ENCODE measurements at regions of chr15 and their contacts with region 1.

Region 1: DNA sequence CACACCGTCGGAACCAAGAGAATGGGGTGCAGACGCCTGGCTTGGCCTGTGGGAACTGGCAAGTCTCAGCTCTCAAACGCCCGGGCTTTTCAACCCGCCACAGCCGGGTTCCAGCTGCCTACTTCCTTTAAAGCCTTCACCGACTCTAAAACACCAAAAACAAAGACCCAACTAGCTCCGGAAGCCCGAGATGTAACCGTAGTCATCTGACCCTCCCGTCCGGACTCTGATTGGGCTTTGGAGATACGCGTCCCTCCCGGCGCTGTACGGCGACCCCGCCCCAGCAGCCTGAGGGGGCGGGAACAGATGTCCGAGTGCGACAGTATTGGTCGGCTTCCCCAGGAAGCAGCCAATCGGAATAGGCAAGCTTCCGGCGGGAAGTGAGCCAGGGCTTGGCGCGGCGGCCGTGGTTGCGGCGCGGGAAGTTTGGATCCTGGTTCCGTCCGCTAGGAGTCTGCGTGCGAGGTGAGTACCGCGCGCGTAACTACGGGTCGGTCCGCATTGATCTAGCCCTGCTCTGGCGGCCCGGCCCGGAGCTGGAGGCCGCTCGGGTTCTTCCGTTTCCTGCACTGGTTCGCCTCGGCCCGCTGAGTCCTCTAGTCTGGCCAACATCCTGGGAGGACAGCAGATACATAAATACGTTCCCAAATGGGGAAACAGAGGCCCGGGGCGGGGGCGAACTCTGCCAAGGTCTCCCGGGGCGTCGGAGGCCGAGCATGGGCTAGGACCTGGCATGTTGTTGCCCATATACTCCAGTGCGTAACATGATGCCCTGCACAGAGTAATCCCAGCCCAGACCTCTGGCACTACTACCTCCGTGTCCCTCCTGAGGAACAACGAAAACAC is at the start of gene BLM:
- DNase-seq: peak; percentile 96 to 98 (median 98)
- ATAC-seq: peak; percentile 100
- H3K4me3 ChIP-seq: peak within 1 kb of the TSS; percentile 76
- H3K27ac ChIP-seq: peak within 1 kb of the TSS; percentile 89
- H3K4me1 ChIP-seq: no peaks in the 10 kb centered on the region
- H3K27me3 ChIP-seq: no peaks in the 10 kb centered on the region
- total RNA-seq, gene BLM: 8.1 to 45.3 (median 29.0) TPM

Region 2: DNA sequence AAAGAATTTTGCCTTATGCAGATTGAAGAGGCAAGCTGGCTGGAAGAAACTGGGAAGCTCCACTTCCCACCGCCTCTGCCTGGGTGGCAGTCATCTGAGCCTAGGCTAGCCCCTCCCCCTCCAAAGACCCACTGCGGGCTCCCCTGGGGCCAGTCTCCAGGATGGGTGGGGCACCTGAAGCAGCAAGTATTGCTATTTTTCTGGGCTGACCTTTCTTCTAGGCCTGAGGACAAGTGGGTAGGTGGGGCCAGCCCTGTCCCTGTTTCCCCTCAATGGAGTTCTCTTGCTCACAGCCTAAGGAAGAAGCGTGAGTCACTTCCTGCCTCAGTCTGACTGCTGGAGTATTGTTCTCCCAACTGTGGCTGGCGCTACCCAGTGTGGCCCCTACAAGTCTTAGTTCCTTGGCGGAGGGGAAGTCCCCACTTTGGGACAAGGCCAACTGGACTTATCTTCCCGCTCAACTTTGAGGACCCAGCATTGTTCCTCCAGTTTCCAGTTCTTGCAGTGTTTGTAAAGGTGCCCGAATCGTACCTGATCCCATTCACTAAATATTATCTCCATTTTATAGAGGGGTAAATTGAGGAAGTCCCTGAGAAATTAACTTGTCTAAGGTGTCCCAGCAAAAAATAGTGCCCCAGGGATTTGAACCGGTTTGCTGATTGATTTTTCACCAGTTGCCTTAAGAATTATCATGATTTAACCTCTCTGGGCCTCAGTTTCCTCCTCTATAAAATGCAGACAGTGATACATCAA is 152.6 kb after region 1 on chr15:
- intact Hi-C with region 1: loop called in 1 of 4 experiments (anchors 5 kb)
- DNase-seq: peak; percentile 91 to 93 (median 93)
- ATAC-seq: peak; percentile 84 to 93
- H3K4me3 ChIP-seq: no peak overlapping the region
- H3K27ac ChIP-seq: peak overlapping the region; percentile 94
- H3K4me1 ChIP-seq: peaks cover 25% of the 10 kb centered on the region
- H3K27me3 ChIP-seq: no peaks in the 10 kb centered on the region

Region 3: DNA sequence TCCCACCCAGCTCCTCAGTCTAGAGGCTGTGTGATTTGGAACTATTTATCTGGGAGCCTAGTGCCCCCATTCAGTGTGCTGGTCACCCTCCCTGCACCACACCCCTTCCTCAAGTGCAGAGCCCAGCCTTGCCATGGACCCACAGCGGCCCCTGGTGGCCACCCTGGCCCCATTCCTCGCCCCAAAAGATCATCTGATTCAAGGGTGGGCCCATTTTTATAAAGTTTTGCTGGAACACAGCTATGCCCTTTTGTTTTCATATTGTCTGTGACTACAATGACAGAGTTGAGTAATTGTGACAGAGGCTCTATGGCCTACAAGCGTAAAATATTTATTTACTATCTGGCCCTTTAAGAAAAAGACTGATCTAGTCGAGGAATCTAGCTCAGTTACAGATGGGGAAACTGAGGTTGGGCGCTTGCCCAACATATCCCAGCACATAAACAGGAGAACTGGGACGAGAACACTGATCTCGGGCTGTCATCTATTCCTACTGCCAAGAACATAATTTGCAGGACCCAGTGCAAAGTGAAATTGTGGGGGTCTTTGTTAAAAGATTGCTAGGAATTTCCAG is 168.9 kb after region 1 on chr15:
- intact Hi-C with region 1: loop called in 2 of 4 experiments (anchors 5 to 10 kb)
- DNase-seq: peak; percentile 82 to 94 (median 93)
- ATAC-seq: peak; percentile 62 to 66
- H3K4me3 ChIP-seq: peak overlapping the region; percentile 66
- H3K27ac ChIP-seq: peak overlapping the region; percentile 92
- H3K4me1 ChIP-seq: peaks cover 4% of the 10 kb centered on the region
- H3K27me3 ChIP-seq: no peaks in the 10 kb centered on the region